CD4-positive, alpha-beta memory T cell (primary cell): ENCODE measurements at regions of chr5 and their contacts with region 1.

Region 1: GRCh38 chr5:81006947-81007636 is 46.9 kb downstream of the RASGRF2 start:
- DNase-seq: peak; percentile 80 to 84 (median 84)
- H3K4me3 ChIP-seq: peak overlapping the region; percentile 2 to 41
- H3K4me3 Mint-ChIP-seq: peak overlapping the region; percentile 83 to 94 (median 88)
- H3K27ac ChIP-seq: peak overlapping the region; percentile 78
- H3K27ac Mint-ChIP-seq: peak overlapping the region; percentile 89 to 99 (median 94)
- H3K4me1 ChIP-seq: peaks cover 85% of the 10 kb centered on the region
- H3K4me1 Mint-ChIP-seq: peaks cover 56 to 89% (median 70%) of the 10 kb centered on the region in 4 donors
- H3K27me3 ChIP-seq: no peaks in the 10 kb centered on the region
- H3K27me3 Mint-ChIP-seq: no peaks in the 10 kb centered on the region

Region 2: GRCh38 chr5:80407735-80408482 is 599.2 kb before region 1 on chr5 and contains the start of gene ZFYVE16:
- CTCF ChIA-PET with region 1: no interaction called
- POLR2A ChIA-PET with region 1: no interaction called
- intact Hi-C with region 1: loop called (anchors 5 kb)
- DNase-seq: peak; percentile 95 to 97 (median 96)
- H3K4me3 ChIP-seq: peak within 1 kb of the TSS; percentile 73 to 79
- H3K4me3 Mint-ChIP-seq: peak within 1 kb of the TSS; percentile 92 to 98 (median 96)
- H3K27ac ChIP-seq: peak within 1 kb of the TSS; percentile 86
- H3K27ac Mint-ChIP-seq: peak within 1 kb of the TSS; percentile 91 to 100 (median 99)
- H3K4me1 ChIP-seq: peaks cover 22% of the 10 kb centered on the region
- H3K4me1 Mint-ChIP-seq: peaks cover 15 to 24% (median 20%) of the 10 kb centered on the region in 4 donors
- H3K27me3 ChIP-seq: no peaks in the 10 kb centered on the region
- H3K27me3 Mint-ChIP-seq: no peaks in the 10 kb centered on the region
- total RNA-seq, gene ZFYVE16: 23.2 to 25.3 TPM

Region 3: GRCh38 chr5:80960531-80961375 is 46.3 kb before region 1 on chr5:
- CTCF ChIA-PET with region 1: interaction called, 9 read pairs
- POLR2A ChIA-PET with region 1: interaction called, 70 read pairs
- intact Hi-C with region 1: loop called (anchors 1 kb)
- DNase-seq: peak; percentile 45 to 59 (median 55)
- H3K4me3 ChIP-seq: peak overlapping the region; percentile 84 to 85
- H3K4me3 Mint-ChIP-seq: peak overlapping the region; percentile 87 to 97 (median 94)
- H3K27ac ChIP-seq: peak overlapping the region; percentile 44
- H3K27ac Mint-ChIP-seq: peak overlapping the region; percentile 76 to 94 (median 82)
- H3K4me1 ChIP-seq: peaks cover 52% of the 10 kb centered on the region
- H3K4me1 Mint-ChIP-seq: peaks cover 40 to 64% (median 50%) of the 10 kb centered on the region in 4 donors
- H3K27me3 ChIP-seq: no peaks in the 10 kb centered on the region
- H3K27me3 Mint-ChIP-seq: no peaks in the 10 kb centered on the region

Region 4: GRCh38 chr5:80975065-80975464 is 32.0 kb before region 1 on chr5:
- CTCF ChIA-PET with region 1: interaction called, 4 read pairs
- POLR2A ChIA-PET with region 1: interaction called, 14 read pairs
- intact Hi-C with region 1: no loop called
- DNase-seq: no peak
- H3K4me3 ChIP-seq: no peak overlapping the region
- H3K4me3 Mint-ChIP-seq: peak overlapping the region in 4 of 8 donors; percentile 11 to 43 (median 20)
- H3K27ac ChIP-seq: no peak overlapping the region
- H3K27ac Mint-ChIP-seq: peak overlapping the region in 5 of 7 donors; percentile 6 to 66 (median 43)
- H3K4me1 ChIP-seq: peaks cover 45% of the 10 kb centered on the region
- H3K4me1 Mint-ChIP-seq: peaks cover 55 to 88% (median 71%) of the 10 kb centered on the region in 4 donors
- H3K27me3 ChIP-seq: no peaks in the 10 kb centered on the region
- H3K27me3 Mint-ChIP-seq: no peaks in the 10 kb centered on the region

Region 5: DNA sequence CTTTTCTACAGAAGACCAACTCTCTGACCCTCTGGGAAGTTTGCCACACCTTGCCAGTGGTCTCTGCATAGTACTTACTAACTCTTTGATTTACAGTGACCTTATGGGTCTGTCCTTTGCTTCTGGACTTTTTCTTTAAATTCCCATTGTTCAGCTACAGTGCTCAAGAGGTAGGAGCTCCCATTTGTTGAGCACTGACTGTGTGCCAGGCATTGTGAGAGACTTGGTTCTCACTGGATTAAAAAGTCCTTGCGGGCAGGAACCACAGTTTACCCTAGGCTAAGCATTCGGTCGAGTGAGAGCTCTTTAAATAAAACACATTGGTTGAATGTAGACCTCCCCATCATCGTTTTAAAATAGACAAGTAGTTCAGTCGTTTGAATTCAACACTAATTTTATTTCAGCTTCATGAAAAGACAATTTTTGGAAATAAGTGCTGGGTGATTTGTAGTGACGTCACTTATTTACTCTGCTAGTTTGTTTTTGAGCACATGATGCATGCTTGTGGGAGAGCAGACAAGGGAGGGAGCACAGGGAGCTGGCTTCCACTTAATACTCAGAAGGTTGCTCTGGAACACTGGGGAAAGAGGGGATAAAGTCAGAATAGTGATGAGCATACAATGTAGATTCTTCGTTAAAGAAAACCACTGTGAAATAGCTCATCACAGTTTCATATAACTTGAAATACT is 19.9 kb before region 1 on chr5:
- CTCF ChIA-PET with region 1: interaction called, 4 read pairs
- POLR2A ChIA-PET with region 1: interaction called, 6 read pairs
- intact Hi-C with region 1: loop called (anchors 2 kb)
- DNase-seq: no peak
- H3K4me3 ChIP-seq: no peak overlapping the region
- H3K4me3 Mint-ChIP-seq: peak overlapping the region in 5 of 8 donors; percentile 4 to 53 (median 27)
- H3K27ac ChIP-seq: no peak overlapping the region
- H3K27ac Mint-ChIP-seq: peak overlapping the region in 3 of 7 donors; percentile 7 to 91 (median 36)
- H3K4me1 ChIP-seq: peaks cover 52% of the 10 kb centered on the region
- H3K4me1 Mint-ChIP-seq: peaks cover 41 to 79% (median 66%) of the 10 kb centered on the region in 4 donors
- H3K27me3 ChIP-seq: no peaks in the 10 kb centered on the region
- H3K27me3 Mint-ChIP-seq: no peaks in the 10 kb centered on the region

Region 6: DNA sequence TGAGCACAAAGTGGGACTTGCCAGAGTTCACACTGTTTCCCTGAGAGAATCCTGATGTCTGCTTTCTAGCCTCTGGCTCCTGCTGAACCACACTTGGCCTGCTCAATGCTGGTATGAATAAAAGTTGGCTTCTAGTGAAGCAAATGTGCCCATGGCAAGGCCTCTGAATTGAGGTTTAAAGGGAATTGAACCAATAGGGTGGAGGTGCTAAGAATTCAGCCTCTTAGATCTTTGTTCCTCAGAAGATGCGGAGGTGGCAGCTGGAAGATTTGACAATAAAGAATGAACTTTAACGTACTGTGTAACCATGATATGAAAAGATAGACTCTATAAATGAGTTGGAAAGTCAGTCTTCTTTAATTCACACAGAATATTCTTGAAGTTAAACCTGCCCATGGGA is 10.2 kb after region 1 on chr5:
- CTCF ChIA-PET with region 1: interaction called, 11 read pairs
- POLR2A ChIA-PET with region 1: interaction called, 13 read pairs
- intact Hi-C with region 1: no loop called
- DNase-seq: no peak
- H3K4me3 ChIP-seq: no peak overlapping the region
- H3K4me3 Mint-ChIP-seq: peak overlapping the region in 3 of 8 donors; percentile 6 to 18 (median 14)
- H3K27ac ChIP-seq: no peak overlapping the region
- H3K27ac Mint-ChIP-seq: peak overlapping the region in 1 of 7 donors; percentile 2
- H3K4me1 ChIP-seq: peaks cover 56% of the 10 kb centered on the region
- H3K4me1 Mint-ChIP-seq: peaks cover 49 to 85% (median 67%) of the 10 kb centered on the region in 4 donors
- H3K27me3 ChIP-seq: no peaks in the 10 kb centered on the region
- H3K27me3 Mint-ChIP-seq: no peaks in the 10 kb centered on the region

Region 7: GRCh38 chr5:81035522-81035921 is 28.4 kb after region 1 on chr5:
- CTCF ChIA-PET with region 1: no interaction called
- POLR2A ChIA-PET with region 1: no interaction called
- intact Hi-C with region 1: loop called (anchors 2 kb)
- DNase-seq: no peak
- H3K4me3 ChIP-seq: no peak overlapping the region
- H3K4me3 Mint-ChIP-seq: no peak overlapping the region
- H3K27ac ChIP-seq: no peak overlapping the region
- H3K27ac Mint-ChIP-seq: no peak overlapping the region
- H3K4me1 ChIP-seq: no peaks in the 10 kb centered on the region
- H3K4me1 Mint-ChIP-seq: peaks cover 10 to 16% (median 14%) of the 10 kb centered on the region in 4 donors
- H3K27me3 ChIP-seq: no peaks in the 10 kb centered on the region
- H3K27me3 Mint-ChIP-seq: no peaks in the 10 kb centered on the region

Region 8: GRCh38 chr5:82991678-82992323 is 1984.7 kb after region 1 on chr5:
- CTCF ChIA-PET with region 1: no interaction called
- POLR2A ChIA-PET with region 1: no interaction called
- intact Hi-C with region 1: no loop called
- DNase-seq: no peak
- H3K4me3 ChIP-seq: no peak overlapping the region
- H3K4me3 Mint-ChIP-seq: no peak overlapping the region
- H3K27ac ChIP-seq: no peak overlapping the region
- H3K27ac Mint-ChIP-seq: no peak overlapping the region
- H3K4me1 ChIP-seq: no peaks in the 10 kb centered on the region
- H3K4me1 Mint-ChIP-seq: no peaks in the 10 kb centered on the region
- H3K27me3 ChIP-seq: no peaks in the 10 kb centered on the region
- H3K27me3 Mint-ChIP-seq: peaks cover 1 to 4% of the 10 kb centered on the region in 2 donors